MCF 10A (cell line): ENCODE measurements at regions of chr1 and their contacts with region 1.

Region 1: GRCh38 chr1:10507111-10507879 is 32.5 kb downstream of the PEX14 start:
- DNase-seq: peak; percentile 86
- H3K4me3 Mint-ChIP-seq: no peak overlapping the region
- H3K27ac Mint-ChIP-seq: no peak overlapping the region
- H3K4me1 Mint-ChIP-seq: peaks cover 17% of the 10 kb centered on the region
- H3K27me3 Mint-ChIP-seq: no peaks in the 10 kb centered on the region
- CTCF ChIP-seq: peak; percentile 83

Region 2: GRCh38 chr1:10530281-10530740 is 23.0 kb after region 1 on chr1:
- CTCF ChIA-PET with region 1: interaction called, 7 read pairs
- POLR2A ChIA-PET with region 1: interaction called, 34 read pairs
- intact Hi-C with region 1: loop called (anchors 1 kb)
- DNase-seq: peak; percentile 74
- H3K4me3 Mint-ChIP-seq: peak overlapping the region; percentile 44
- H3K27ac Mint-ChIP-seq: peak overlapping the region; percentile 37
- H3K4me1 Mint-ChIP-seq: peaks cover 32% of the 10 kb centered on the region
- H3K27me3 Mint-ChIP-seq: no peaks in the 10 kb centered on the region
- CTCF ChIP-seq: peak; percentile 89

Region 3: GRCh38 chr1:10694633-10695627 is 187.6 kb after region 1 on chr1:
- CTCF ChIA-PET with region 1: interaction called, 3 read pairs
- POLR2A ChIA-PET with region 1: no interaction called
- intact Hi-C with region 1: loop called (anchors 5 kb)
- DNase-seq: peak; percentile 83
- H3K4me3 Mint-ChIP-seq: peak overlapping the region; percentile 71
- H3K27ac Mint-ChIP-seq: no peak overlapping the region
- H3K4me1 Mint-ChIP-seq: peaks cover 24% of the 10 kb centered on the region
- H3K27me3 Mint-ChIP-seq: no peaks in the 10 kb centered on the region
- CTCF ChIP-seq: no peak

Region 4: GRCh38 chr1:10901086-10901890 is 394.0 kb after region 1 on chr1:
- CTCF ChIA-PET with region 1: no interaction called
- POLR2A ChIA-PET with region 1: interaction called, 12 read pairs
- intact Hi-C with region 1: no loop called
- DNase-seq: peak; percentile 63
- H3K4me3 Mint-ChIP-seq: peak overlapping the region; percentile 72
- H3K27ac Mint-ChIP-seq: peak overlapping the region; percentile 93
- H3K4me1 Mint-ChIP-seq: peaks cover 43% of the 10 kb centered on the region
- H3K27me3 Mint-ChIP-seq: no peaks in the 10 kb centered on the region
- CTCF ChIP-seq: no peak

Region 5: DNA sequence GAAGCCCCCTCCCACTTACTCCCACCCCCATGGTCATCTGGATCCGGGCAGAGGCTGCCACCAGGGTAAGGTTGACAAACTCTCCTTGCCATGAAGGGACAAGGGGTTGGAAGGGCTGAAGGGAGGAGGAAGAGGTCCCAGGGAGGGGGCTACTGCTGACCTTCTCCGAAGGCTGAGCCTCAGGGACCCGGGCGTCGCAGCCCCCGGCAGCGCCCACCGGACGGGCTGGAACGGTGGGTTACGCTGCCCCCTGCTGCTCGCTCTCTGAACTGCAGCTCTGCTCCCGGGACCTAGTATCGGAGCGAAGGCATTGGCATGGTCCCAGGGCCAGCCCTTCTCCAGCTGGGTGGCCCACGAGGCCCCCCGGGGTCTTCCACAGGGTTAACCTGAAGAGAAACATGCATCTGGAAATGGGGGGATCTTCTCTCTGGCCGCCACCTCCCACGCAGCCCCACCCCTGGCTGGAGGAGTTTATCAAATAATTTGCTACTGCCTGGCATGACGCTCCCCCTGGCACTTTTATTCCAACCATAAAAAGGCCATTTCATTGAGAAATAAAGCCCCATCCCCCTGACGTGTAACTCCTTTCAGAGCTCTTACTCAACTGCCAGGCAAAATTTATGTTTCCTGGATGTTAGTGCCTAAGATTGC is 434.7 kb after region 1 on chr1:
- CTCF ChIA-PET with region 1: interaction called, 5 read pairs
- POLR2A ChIA-PET with region 1: no interaction called
- intact Hi-C with region 1: loop called (anchors 1 kb)
- DNase-seq: peak; percentile 56
- H3K4me3 Mint-ChIP-seq: no peak overlapping the region
- H3K27ac Mint-ChIP-seq: no peak overlapping the region
- H3K4me1 Mint-ChIP-seq: peaks cover 15% of the 10 kb centered on the region
- H3K27me3 Mint-ChIP-seq: peaks cover 11% of the 10 kb centered on the region
- CTCF ChIP-seq: peak; percentile 98

Region 6: DNA sequence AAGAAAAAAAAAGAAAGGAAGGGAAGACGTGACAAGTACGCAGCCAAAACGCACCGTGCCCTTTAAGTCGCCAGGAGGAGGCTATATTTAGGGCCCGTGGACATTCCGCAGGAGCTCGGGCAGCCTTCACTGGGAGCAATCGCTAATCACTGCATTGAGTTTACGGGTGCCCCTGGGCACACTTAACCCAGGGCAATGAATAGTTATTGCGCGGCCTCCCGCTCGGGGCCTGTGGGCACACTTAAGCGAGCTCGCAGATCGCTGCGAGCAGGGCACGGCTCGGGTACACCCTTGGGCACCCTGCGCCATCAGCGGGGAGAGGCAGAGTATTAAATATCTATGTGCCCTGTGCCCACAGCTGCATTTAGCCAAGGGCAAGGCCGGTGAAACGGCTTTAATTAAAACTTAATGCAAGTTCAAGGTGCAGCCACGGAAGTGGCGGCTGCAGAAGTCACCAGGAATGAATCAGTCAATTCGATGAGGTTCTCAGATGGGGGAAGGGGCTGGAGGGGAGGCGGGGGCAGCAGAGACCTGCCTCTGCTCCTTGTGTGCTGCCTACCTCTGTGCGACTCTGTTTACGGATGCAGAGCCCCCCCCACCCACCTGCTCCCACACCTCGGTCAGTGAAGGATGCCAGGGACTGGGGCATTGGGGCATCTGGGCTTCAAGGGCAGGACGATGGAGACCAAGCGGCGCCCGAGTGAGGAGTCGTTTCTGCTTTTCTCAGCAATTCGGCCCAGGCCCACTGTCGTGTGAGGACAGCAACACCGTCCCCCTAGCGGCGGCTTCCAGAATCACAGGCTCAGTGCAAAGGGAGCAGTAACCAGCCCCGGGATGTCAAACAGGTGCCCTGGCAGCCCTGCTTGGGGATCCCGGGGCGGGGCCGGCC is 453.4 kb after region 1 on chr1:
- CTCF ChIA-PET with region 1: no interaction called
- POLR2A ChIA-PET with region 1: no interaction called
- intact Hi-C with region 1: no loop called
- DNase-seq: peak; percentile 75
- H3K4me3 Mint-ChIP-seq: no peak overlapping the region
- H3K27ac Mint-ChIP-seq: no peak overlapping the region
- H3K4me1 Mint-ChIP-seq: no peaks in the 10 kb centered on the region
- H3K27me3 Mint-ChIP-seq: no peaks in the 10 kb centered on the region
- CTCF ChIP-seq: peak; percentile 83